Gastrocnemius medialis (tissue), 4 donors: ENCODE measurements at regions of chr6 and their contacts with region 1.

Region 1: DNA sequence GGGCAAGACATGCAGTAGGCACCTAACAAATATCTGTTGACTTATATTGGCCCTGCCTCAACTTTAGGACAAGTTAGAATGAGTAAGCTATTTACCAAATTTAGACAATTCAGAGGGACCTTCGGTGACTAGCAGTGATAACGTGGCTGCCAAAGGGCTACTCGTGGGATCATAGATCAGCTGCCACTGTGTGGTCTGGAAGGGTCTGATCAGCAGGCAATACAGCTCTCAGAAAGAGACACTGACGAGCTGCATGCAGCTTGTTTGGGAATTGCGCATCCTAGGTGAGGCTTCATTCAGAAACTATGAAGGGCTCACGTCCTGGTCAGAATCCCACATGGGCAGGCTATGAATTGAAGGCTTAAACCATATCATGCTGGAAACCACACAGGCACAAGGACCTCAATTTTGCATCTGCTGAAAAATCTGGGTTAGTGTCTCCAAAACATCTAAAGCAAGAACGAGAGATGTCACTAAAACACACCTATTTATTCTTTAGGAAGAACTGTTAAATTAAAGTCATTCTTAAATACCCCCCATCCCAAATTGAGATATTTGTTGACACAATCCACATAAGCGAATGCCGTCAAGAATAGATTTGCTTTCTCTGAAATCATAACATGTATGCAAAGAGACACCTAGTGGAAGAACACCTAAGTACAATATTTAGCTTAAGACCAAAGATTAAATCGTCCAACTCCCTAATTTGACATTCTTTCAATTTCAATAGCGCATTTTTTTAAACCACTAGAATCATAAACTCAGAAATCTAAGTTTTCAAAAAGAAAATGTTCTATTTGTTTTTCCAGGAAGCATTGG is 79.6 kb downstream of the IPCEF1 start:
- DNase-seq: no peak
- ATAC-seq: no peak
- H3K4me3 ChIP-seq: no peak overlapping the region
- H3K27ac ChIP-seq: no peak overlapping the region
- H3K4me1 ChIP-seq: no peaks in the 10 kb centered on the region
- H3K27me3 ChIP-seq: no peaks in the 10 kb centered on the region
- CTCF ChIP-seq: peak in 4 of 5 experiments; percentile 19 to 47 (median 37)
- POLR2A ChIP-seq: no peak

Region 2: GRCh38 chr6:153957394-153957793 is 319.6 kb before region 1 on chr6:
- in situ Hi-C with region 1: no loop called
- intact Hi-C with region 1: no loop called
- DNase-seq: no peak
- ATAC-seq: no peak
- H3K4me3 ChIP-seq: no peak overlapping the region
- H3K27ac ChIP-seq: no peak overlapping the region
- H3K4me1 ChIP-seq: no peaks in the 10 kb centered on the region
- H3K27me3 ChIP-seq: no peaks in the 10 kb centered on the region
- CTCF ChIP-seq: no peak
- POLR2A ChIP-seq: no peak

Region 3: DNA sequence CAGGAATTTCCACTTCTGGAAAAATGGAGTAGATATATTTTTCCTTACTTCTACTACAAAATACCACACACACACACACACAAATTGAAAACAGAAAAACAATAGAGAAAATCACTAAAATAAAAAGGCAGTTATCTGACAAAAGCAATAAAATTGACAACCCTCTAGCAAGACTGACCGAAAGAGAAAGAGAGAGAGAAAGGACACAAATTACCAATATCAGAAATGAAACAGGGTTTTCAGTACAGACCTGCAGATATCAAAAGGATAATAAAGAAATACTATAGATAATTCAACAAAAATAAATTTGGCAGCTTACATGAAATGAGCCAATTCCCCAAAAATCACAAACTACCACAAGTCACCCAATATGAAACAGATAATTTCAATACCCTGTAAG is 133.3 kb before region 1 on chr6:
- in situ Hi-C with region 1: no loop called
- intact Hi-C with region 1: no loop called
- DNase-seq: no peak
- ATAC-seq: no peak
- H3K4me3 ChIP-seq: no peak overlapping the region
- H3K27ac ChIP-seq: no peak overlapping the region
- H3K4me1 ChIP-seq: no peaks in the 10 kb centered on the region
- H3K27me3 ChIP-seq: no peaks in the 10 kb centered on the region
- CTCF ChIP-seq: no peak
- POLR2A ChIP-seq: no peak

Region 4: GRCh38 chr6:154156135-154156896 is 120.7 kb before region 1 on chr6:
- in situ Hi-C with region 1: loop called in 2 of 4 experiments (anchors 5 to 10 kb)
- intact Hi-C with region 1: loop called (anchors 2 kb)
- DNase-seq: no peak
- ATAC-seq: no peak
- H3K4me3 ChIP-seq: no peak overlapping the region
- H3K27ac ChIP-seq: no peak overlapping the region
- H3K4me1 ChIP-seq: no peaks in the 10 kb centered on the region
- H3K27me3 ChIP-seq: no peaks in the 10 kb centered on the region
- CTCF ChIP-seq: peak in 2 of 5 experiments; percentile 10 to 15
- POLR2A ChIP-seq: no peak

Region 5: GRCh38 chr6:154202339-154202738 is 74.7 kb before region 1 on chr6:
- in situ Hi-C with region 1: no loop called
- intact Hi-C with region 1: no loop called
- DNase-seq: no peak
- ATAC-seq: no peak
- H3K4me3 ChIP-seq: no peak overlapping the region
- H3K27ac ChIP-seq: no peak overlapping the region
- H3K4me1 ChIP-seq: no peaks in the 10 kb centered on the region
- H3K27me3 ChIP-seq: no peaks in the 10 kb centered on the region
- CTCF ChIP-seq: no peak
- POLR2A ChIP-seq: no peak

Region 6: DNA sequence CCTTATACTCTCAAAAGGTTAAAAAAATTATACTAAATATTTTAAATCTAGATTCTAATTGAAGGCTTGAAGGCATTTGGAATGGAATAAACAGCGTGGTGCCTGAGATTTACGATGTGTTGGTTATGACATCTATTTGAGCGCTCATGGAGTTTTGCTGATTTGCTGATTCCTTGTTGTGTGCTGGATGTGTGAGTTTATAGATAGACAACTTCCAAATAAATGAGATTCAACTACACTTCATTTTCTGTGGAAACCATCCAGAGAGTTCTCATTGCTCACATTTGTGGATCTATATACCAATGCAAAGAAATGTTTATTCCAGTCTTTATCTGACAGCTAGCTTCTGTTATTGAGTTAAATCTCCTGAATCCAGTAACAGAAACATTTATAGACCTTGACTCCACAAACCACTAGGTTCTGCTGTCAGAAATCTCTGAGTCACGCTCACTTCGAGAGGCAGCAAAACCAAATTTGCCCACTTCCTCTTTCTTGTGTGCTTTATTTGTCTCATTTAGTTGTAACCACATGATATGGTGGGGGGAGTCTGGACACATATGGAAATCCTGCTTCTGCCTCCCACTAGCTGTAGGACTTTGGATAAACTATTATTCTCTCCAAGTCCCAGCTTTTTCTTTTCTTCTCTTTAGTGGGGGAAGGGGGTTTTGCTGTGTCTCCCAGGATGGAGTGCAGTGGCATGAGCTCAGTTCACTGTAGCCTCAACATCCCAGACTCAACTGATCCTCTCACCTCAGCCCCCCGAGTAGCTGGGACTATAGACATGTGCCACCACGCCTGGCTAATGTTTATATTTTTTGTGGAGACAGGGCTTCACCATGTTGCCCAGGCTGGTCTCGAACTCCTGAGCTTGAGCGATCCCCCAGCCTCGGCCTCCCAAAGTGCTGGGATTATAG is 25.1 kb after region 1 on chr6:
- in situ Hi-C with region 1: no loop called
- intact Hi-C with region 1: no loop called
- DNase-seq: no peak
- ATAC-seq: no peak
- H3K4me3 ChIP-seq: no peak overlapping the region
- H3K27ac ChIP-seq: no peak overlapping the region
- H3K4me1 ChIP-seq: no peaks in the 10 kb centered on the region
- H3K27me3 ChIP-seq: no peaks in the 10 kb centered on the region
- CTCF ChIP-seq: no peak
- POLR2A ChIP-seq: no peak